Activated CD8-positive, alpha-beta T cell treated with anti-CD3 and anti-CD28 coated beads for 36 hours (primary cell): ENCODE measurements at regions of chr14 and their contacts with region 1.

Region 1: GRCh38 chr14:36070031-36070719 is 106.3 kb downstream of the PTCSC3 start:
- DNase-seq: peak; percentile 65
- ATAC-seq: peak; percentile 55
- H3K4me3 Mint-ChIP-seq: no peak overlapping the region
- H3K27ac Mint-ChIP-seq: no peak overlapping the region
- H3K4me1 Mint-ChIP-seq: peaks cover 2% of the 10 kb centered on the region
- H3K27me3 Mint-ChIP-seq: peaks cover 28% of the 10 kb centered on the region
- CTCF ChIP-seq: peak; percentile 62

Region 2: DNA sequence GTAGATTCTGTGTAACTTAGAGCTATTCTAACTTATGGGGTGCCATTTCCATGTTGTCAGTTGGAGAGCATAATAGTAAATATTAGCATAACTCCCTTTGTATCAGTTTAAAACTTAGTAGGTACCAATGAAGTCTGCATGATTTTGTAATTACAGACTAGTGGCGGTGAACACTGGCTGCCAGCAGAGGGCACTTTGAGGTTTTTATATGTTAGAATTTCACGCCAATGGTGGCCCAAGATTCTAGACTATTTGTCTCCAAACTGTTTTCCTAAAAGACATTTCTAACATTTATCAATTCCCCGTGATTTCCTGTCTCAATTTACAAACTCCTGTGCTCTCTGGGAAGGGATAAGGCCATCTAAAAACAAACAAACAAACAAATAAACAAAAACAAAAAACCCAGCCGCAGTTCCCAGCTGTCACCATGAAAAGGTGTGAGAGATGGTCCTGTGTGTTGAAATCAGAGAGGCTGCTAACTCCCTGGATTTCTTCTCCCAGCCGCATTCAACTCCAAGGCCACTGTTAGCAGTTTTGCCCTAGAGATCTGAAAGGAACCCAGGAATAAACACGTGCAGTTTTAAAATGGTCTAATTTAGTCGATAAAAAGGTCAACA is 186.4 kb before region 1 on chr14:
- CTCF ChIA-PET with region 1: interaction called, 126 read pairs
- POLR2A ChIA-PET with region 1: no interaction called
- intact Hi-C with region 1: loop called (anchors 2 kb)
- DNase-seq: peak; percentile 66
- ATAC-seq: no peak
- H3K4me3 Mint-ChIP-seq: no peak overlapping the region
- H3K27ac Mint-ChIP-seq: no peak overlapping the region
- H3K4me1 Mint-ChIP-seq: no peaks in the 10 kb centered on the region
- H3K27me3 Mint-ChIP-seq: peaks cover 2% of the 10 kb centered on the region
- CTCF ChIP-seq: peak; percentile 74

Region 3: DNA sequence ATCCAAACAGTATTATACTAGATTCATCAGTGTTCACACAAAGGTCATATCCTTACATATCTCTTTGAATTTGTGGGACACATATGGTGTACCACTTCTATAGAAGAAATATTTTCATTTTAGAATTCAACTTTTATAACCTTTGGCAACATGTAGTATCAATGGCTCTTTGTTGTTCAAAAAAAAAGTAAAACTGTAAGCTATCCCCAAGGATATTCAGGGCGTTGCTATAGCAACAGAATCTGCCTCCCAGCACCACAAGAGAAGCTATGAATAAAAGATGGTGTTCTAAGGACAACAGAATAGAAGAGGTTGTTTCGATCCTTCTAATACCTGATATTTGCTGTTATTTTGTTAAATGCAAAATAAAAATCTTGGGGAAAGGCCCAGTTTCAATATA is 104.8 kb before region 1 on chr14:
- CTCF ChIA-PET with region 1: interaction called, 20 read pairs
- POLR2A ChIA-PET with region 1: no interaction called
- intact Hi-C with region 1: no loop called
- DNase-seq: no peak
- ATAC-seq: no peak
- H3K4me3 Mint-ChIP-seq: no peak overlapping the region
- H3K27ac Mint-ChIP-seq: no peak overlapping the region
- H3K4me1 Mint-ChIP-seq: no peaks in the 10 kb centered on the region
- H3K27me3 Mint-ChIP-seq: peaks cover 4% of the 10 kb centered on the region
- CTCF ChIP-seq: no peak

Region 4: DNA sequence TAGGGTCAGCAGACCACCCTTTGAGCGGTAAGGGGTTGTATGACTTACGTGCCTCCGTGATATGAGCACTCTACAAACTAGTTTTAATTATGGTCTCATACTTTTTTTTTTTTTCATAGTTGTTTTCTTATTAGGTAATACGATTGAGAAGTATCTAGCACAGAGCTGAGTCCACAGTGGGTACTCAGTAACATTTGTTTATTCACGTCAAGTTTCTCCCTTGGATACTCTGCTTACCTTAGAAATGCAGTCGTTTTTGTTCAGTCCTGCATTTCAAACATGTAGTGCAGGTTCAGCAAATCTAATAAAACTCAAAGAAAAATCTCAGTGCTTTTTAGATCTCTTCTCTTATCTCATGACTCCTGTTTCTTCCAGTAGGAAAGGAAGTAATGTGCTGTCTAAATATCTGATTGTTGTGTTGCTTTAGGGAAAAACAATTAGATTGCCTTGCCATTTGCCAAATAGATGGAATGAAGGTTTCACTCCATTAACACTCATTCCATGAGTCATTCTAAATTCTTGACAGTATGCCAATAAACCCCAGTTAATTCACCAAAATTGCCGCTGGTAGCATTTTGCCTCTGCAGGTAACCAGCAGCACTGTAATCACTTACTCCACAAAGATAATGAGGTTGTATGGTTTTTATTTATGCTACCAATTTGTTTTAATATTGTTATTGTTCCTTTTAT is 12.6 kb before region 1 on chr14:
- CTCF ChIA-PET with region 1: interaction called, 22 read pairs
- POLR2A ChIA-PET with region 1: no interaction called
- intact Hi-C with region 1: no loop called
- DNase-seq: no peak
- ATAC-seq: no peak
- H3K4me3 Mint-ChIP-seq: no peak overlapping the region
- H3K27ac Mint-ChIP-seq: no peak overlapping the region
- H3K4me1 Mint-ChIP-seq: no peaks in the 10 kb centered on the region
- H3K27me3 Mint-ChIP-seq: peaks cover 4% of the 10 kb centered on the region
- CTCF ChIP-seq: no peak

Region 5: DNA sequence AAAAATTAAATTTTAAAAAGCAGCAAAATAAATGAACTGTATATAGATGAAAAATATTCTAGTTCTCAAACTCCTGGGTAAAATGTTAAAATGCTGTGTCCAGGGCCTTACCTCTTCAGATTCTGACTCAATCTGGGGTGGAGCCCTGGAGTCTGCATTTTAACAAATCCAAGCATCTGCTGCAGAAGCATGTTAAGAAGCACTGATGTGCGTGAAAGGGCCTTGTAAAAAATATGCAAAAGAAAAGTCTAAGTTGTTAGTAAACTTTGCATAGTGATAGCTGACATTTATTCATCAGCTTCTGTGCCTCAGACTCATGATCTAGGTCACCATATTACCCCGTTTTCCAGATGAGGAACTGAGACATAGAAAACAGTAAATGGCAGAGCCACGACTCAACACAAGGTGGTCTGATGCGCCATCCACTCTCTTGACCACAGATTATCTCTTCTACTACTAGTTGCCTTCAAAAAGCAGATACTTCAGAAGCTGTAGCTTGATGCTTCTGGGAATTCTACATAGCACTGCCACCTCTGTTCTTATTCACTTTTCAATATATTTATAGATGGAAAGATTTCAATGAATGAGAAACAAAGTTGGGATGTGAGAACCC is 134.4 kb after region 1 on chr14:
- CTCF ChIA-PET with region 1: interaction called, 12 read pairs
- POLR2A ChIA-PET with region 1: no interaction called
- intact Hi-C with region 1: no loop called
- DNase-seq: no peak
- ATAC-seq: no peak
- H3K4me3 Mint-ChIP-seq: no peak overlapping the region
- H3K27ac Mint-ChIP-seq: no peak overlapping the region
- H3K4me1 Mint-ChIP-seq: no peaks in the 10 kb centered on the region
- H3K27me3 Mint-ChIP-seq: peaks cover 9% of the 10 kb centered on the region
- CTCF ChIP-seq: no peak

Region 6: GRCh38 chr14:36373982-36374673 is 304.0 kb after region 1 on chr14:
- CTCF ChIA-PET with region 1: interaction called, 92 read pairs
- POLR2A ChIA-PET with region 1: no interaction called
- intact Hi-C with region 1: loop called (anchors 5 kb)
- DNase-seq: peak; percentile 85
- ATAC-seq: peak; percentile 82
- H3K4me3 Mint-ChIP-seq: no peak overlapping the region
- H3K27ac Mint-ChIP-seq: no peak overlapping the region
- H3K4me1 Mint-ChIP-seq: no peaks in the 10 kb centered on the region
- H3K27me3 Mint-ChIP-seq: no peaks in the 10 kb centered on the region
- CTCF ChIP-seq: peak; percentile 74